GM13977 (cell line): ENCODE measurements at regions of chr15 and their contacts with region 1.

Region 1: DNA sequence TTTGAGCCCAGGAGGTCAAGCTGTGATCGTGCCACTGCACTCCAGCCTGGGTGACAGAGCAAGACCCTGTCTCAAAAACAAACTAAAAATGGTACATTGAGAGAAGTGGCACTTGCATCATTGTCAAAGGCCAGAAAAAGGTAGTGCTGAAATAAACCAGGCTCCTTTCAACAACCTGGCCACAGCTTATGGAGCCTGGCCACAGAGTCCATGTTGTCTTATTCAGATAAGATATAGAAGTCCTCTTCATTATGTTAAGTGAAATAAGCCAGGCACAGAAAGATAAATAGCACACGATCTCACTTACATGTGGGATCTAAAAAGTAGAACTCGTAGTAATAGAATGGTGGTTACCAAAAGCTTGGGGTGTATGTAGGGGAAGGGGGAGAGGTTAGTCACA is 34.8 kb downstream of the EMC4 start:
- DNase-seq: no peak
- CTCF ChIP-seq: no peak

Region 2: DNA sequence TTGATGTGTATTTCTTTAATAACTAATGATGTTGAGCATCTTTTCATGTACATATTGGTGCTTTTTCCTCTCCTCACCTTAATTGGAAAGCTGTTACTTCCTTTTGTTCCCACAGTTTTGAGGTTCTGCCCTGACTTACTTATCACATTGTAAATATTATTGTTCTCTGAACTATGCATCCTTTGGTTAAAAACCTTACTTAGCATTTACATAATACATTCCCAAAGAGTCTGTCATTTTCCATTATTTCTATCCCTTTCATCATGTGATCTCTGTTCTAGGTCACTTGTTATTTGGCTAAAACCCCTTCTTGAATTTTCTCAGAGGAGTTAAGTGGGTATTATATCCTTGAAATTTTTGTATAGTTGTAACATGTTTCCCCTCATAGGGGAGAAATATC is 45.0 kb after region 1 on chr15:
- in situ Hi-C with region 1: loop called (anchors 10 kb)
- DNase-seq: no peak
- CTCF ChIP-seq: no peak

Region 3: DNA sequence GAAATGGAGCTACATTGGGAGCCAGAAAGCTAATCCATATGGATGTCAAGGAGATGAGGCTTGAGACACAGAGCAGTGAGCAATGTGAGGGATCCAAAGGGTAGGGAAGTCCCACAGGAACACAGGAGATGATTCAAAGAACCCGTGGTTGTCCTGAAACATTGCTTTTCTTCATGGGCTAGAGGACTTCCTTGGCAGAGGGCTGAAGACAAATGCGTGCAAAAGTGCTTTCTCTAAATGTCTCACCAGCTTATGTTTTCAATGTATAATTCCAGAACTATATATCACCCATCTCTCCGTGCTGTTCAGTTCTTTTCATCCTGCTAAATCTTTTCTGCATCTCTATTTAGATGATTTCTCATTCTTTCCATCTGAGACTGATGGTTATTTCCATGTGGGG is 224.1 kb after region 1 on chr15:
- in situ Hi-C with region 1: no loop called
- DNase-seq: no peak
- CTCF ChIP-seq: no peak